Activated CD4-positive, alpha-beta memory T cell treated with anti-CD3 and anti-CD28 coated beads for 36 hours (primary cell): ENCODE measurements at regions of chr16 and their contacts with region 1.

Region 1: GRCh38 chr16:21708533-21709115 is 44.9 kb downstream of the OTOA start:
- DNase-seq: peak; percentile 90
- H3K4me3 Mint-ChIP-seq: no peak overlapping the region
- H3K27ac Mint-ChIP-seq: no peak overlapping the region
- H3K4me1 Mint-ChIP-seq: peaks cover 4% of the 10 kb centered on the region
- H3K27me3 Mint-ChIP-seq: no peaks in the 10 kb centered on the region

Region 2: DNA sequence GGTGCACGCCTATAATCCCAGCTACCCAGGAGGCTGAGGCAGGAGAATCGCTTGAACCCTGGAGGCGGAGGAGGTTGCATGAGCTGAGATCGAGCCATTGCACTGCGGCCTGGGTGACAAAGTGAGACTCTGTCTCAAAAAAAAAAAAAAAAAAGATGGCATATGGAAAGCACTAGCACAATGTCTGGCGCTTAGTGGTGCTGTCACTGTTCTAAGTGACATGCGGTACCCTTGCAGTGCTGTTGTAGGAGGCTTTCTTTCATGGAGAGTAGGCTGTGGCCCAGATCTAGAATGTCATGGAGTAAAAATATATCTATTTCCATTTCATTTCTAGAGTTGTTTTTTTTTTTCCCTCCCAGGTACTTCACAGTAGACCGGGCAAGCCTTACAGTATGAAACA is 123.8 kb before region 1 on chr16:
- CTCF ChIA-PET with region 1: interaction called, 41 read pairs
- POLR2A ChIA-PET with region 1: interaction called, 3 read pairs
- intact Hi-C with region 1: loop called (anchors 1 kb)
- DNase-seq: no peak
- H3K4me3 Mint-ChIP-seq: no peak overlapping the region
- H3K27ac Mint-ChIP-seq: no peak overlapping the region
- H3K4me1 Mint-ChIP-seq: peaks cover 2% of the 10 kb centered on the region
- H3K27me3 Mint-ChIP-seq: no peaks in the 10 kb centered on the region

Region 3: DNA sequence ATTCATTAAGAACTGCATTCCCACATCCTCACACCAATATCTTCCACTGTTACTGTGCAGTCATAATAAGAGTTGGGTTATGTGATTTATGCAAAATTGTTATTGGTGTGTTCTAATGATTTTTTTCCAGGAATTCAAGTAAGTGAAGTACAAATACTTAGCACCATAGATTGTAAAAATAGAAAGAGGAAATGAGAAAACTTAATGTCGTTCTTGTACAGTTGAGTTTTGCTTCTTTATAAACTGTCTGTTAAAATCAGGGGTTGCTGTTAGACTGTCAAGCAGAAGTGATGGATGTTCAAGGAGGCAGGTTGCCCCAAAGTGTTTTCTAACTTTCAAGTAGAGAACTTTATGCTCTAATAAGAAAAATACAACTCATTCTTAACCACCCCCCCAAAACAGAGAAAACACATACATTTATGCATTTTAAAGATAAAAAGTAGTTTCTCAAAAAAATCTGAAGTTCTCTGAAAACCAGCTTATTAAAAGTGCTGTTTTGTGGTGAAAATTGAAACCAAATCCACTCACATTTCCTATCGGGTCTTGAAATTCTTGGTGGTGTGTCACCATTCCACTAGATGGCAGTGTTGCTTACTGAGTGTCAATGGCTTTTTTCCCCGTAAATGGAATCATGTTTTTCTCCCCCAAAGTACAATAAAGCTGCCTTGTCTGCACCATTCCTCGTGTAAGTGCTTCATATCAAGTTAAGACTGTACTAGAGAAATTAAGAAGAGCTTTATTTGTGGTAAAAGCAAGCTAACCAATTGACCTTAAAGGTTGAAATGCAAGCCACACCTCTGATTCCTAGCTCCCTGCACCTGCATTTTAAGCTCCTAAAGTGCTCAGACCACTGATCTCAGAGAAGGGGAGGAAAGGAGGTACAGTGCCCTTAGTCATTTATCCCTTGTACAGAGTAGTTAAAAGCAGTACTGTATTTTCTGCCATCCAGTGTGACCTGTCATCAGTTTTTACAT is 51.5 kb before region 1 on chr16:
- CTCF ChIA-PET with region 1: interaction called, 81 read pairs
- POLR2A ChIA-PET with region 1: no interaction called
- intact Hi-C with region 1: loop called (anchors 1 kb)
- DNase-seq: peak; percentile 29
- H3K4me3 Mint-ChIP-seq: no peak overlapping the region
- H3K27ac Mint-ChIP-seq: no peak overlapping the region
- H3K4me1 Mint-ChIP-seq: peaks cover 41% of the 10 kb centered on the region
- H3K27me3 Mint-ChIP-seq: no peaks in the 10 kb centered on the region

Region 4: GRCh38 chr16:21684199-21684598 is 24.4 kb before region 1 on chr16:
- CTCF ChIA-PET with region 1: interaction called, 11 read pairs
- POLR2A ChIA-PET with region 1: no interaction called
- intact Hi-C with region 1: no loop called
- DNase-seq: peak; percentile 57
- H3K4me3 Mint-ChIP-seq: no peak overlapping the region
- H3K27ac Mint-ChIP-seq: no peak overlapping the region
- H3K4me1 Mint-ChIP-seq: no peaks in the 10 kb centered on the region
- H3K27me3 Mint-ChIP-seq: peaks cover 3% of the 10 kb centered on the region

Region 5: DNA sequence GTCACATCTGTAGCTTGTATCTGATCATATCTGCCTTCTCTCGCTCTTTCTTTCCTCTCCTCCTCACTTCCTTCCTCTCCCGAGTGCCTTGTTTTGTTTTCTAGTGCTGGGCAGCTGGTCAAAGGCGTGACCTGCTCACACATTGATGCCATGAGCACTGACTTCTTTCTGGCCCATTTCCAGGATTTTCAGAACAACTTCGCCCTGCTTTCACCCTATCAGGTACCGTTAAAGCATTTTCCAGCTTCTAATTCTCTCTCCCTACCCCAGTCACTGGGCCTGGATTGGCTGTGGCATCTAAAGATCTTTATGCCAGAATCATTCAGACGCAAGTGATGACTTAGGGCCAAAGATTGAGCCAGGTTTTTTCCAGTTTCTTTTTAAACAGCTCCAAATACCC is 10.7 kb after region 1 on chr16:
- CTCF ChIA-PET with region 1: interaction called, 10 read pairs
- POLR2A ChIA-PET with region 1: no interaction called
- intact Hi-C with region 1: no loop called
- DNase-seq: no peak
- H3K4me3 Mint-ChIP-seq: no peak overlapping the region
- H3K27ac Mint-ChIP-seq: no peak overlapping the region
- H3K4me1 Mint-ChIP-seq: peaks cover 2% of the 10 kb centered on the region
- H3K27me3 Mint-ChIP-seq: no peaks in the 10 kb centered on the region